Endothelial cell of umbilical vein (primary cell): ENCODE measurements at regions of chr16 and their contacts with region 1.

Region 1: DNA sequence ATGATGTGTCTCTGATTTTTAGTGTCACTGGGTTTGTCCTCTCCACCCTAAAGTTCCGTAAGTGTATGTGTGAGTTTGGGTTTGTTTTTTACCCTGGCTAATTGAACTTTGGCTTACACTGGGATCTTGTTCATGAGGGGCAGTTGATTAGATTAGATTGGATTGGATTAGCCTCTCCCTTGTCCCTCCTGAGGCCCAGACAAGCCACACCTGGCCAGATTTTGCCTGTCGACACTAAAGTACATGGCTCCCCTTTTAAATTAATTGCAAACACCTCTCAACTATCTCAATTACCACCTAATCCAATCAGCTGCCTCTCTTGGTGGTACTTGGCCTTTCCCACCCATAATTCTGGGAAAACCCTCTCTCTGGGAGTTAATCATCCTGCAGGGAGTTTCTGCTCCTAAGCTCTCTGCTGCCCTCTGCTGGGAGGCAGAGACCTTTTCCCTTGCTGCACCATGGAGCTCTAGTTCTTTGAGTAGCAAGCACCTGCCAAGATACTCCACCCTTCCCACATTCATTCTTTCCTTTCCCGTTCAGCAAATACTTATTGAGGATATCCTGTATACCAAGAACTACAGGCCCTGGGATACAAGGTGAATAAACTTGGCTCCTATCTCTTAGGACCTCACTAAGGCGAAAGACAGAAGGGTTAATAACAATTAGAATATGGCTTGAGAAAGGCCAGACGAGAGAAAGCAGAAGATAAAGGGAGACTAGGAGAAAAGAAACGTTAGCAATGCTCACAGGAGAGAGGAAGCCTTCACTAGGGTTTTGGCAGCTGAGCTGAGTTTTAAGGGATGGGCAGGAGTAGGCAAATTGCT is 60.0 kb upstream of the MPHOSPH6 start:
- DNase-seq: peak; percentile 76
- H3K4me3 ChIP-seq: no peak overlapping the region
- H3K27ac ChIP-seq: no peak overlapping the region
- H3K4me1 ChIP-seq: no peaks in the 10 kb centered on the region
- H3K27me3 ChIP-seq: peaks cover 9 to 18% of the 10 kb centered on the region in 2 experiments
- CTCF ChIP-seq: peak; percentile 88 to 92
- POLR2A ChIP-seq: no peak

Region 2: GRCh38 chr16:81885976-81886586 is 343.9 kb before region 1 on chr16:
- CTCF ChIA-PET with region 1: interaction called, 59 read pairs
- POLR2A ChIA-PET with region 1: no interaction called
- dilution Hi-C with region 1: no loop called
- intact Hi-C with region 1: loop called (anchors 1 kb)
- DNase-seq: peak; percentile 40
- H3K4me3 ChIP-seq: no peak overlapping the region
- H3K27ac ChIP-seq: no peak overlapping the region
- H3K4me1 ChIP-seq: no peaks in the 10 kb centered on the region
- H3K27me3 ChIP-seq: no peaks in the 10 kb centered on the region
- CTCF ChIP-seq: peak; percentile 73 to 78
- POLR2A ChIP-seq: no peak

Region 3: DNA sequence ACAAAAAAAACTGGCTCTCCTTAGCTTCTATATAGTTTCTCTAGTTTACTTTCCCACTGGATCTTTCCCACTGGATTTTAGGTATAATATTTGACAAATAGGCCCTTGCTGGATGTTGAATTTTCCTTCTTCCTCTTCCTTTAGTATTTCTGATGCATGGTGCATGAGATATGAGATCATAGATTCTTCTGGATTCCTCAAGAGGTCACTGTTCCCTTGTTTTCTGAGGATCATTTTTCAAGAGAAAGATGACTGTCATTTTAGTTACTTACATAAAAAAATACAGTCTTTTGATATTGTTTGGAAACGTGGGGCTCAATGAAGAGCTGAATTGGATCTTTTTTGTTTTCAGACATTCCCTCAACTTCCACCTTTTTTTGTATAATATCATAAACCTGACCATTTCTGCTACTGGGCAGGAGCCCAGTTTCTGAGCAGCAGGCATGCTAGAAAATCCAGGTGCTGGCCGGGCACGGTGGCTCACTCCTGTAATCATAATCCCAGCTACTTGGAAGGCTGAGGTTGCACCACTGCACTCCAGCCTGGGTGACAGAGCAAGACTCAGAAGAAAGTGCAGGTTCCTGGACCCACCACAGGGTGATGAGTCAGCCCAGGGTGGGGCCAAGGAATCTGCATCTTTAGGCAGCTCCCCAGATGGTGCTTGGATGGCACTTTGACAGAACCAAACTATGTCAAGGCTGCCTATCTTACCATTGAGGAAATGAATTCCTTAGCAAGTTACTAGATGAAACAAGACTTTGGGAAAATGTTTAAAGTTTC is 289.0 kb before region 1 on chr16:
- CTCF ChIA-PET with region 1: interaction called, 171 read pairs
- POLR2A ChIA-PET with region 1: no interaction called
- dilution Hi-C with region 1: no loop called
- intact Hi-C with region 1: loop called (anchors 1 kb)
- DNase-seq: peak; percentile 70
- H3K4me3 ChIP-seq: no peak overlapping the region
- H3K27ac ChIP-seq: no peak overlapping the region
- H3K4me1 ChIP-seq: no peaks in the 10 kb centered on the region
- H3K27me3 ChIP-seq: no peaks in the 10 kb centered on the region
- CTCF ChIP-seq: peak; percentile 37 to 47
- POLR2A ChIP-seq: no peak

Region 4: DNA sequence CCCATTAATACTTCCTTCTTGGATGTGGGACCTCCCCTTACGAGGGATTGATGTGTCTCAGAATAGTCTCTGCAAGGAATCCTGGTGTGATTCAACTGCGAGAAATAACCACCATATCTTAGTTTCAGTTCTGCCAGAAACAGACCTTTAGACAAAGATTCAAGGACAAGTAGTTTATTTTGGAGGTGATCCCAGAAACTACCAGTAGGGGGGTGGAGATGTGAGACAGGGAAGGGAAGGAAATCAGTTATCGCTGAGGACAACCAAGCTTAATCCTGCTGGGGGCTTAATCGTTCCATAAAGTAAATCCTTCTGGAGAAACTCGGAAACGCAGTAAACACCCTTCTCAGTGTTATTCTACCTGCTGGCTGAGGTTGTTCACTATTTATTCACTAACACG is 213.7 kb before region 1 on chr16:
- CTCF ChIA-PET with region 1: interaction called, 11 read pairs
- POLR2A ChIA-PET with region 1: no interaction called
- dilution Hi-C with region 1: no loop called
- intact Hi-C with region 1: no loop called
- DNase-seq: peak; percentile 90
- H3K4me3 ChIP-seq: peak overlapping the region in 1 of 3 experiments; percentile 45
- H3K27ac ChIP-seq: no peak overlapping the region
- H3K4me1 ChIP-seq: peaks cover 9% of the 10 kb centered on the region
- H3K27me3 ChIP-seq: peaks cover 4 to 15% of the 10 kb centered on the region in 2 experiments
- CTCF ChIP-seq: peak; percentile 52 to 58
- POLR2A ChIP-seq: no peak

Region 5: DNA sequence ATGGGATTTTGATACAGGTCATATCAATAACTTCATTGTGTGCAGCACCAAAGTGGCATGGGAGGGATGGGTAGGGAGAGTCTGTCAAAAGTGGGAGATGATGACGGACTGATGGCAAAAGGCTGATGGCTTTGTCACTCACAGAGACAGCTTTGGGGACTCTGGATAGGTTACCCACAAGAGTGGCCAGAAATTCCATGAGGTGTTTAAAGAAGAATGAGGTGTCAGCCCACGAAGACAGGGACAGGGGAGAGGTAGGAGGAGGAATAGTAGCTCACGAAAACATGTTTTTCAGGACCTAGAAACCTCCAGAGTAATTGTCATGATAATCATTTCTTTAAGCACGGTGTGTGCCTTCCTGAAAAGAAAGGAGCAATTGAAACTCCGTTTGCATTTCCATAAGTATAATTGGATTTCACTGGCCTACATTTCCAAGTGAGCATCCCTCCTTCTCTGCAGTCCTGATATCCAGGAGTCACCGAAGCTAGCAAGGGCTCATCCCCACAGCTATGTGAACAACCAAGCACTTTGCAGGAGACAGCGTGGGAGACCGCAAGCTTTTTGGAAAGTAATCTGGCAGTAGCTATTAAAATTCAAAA is 135.0 kb before region 1 on chr16:
- CTCF ChIA-PET with region 1: interaction called, 10 read pairs
- POLR2A ChIA-PET with region 1: no interaction called
- dilution Hi-C with region 1: no loop called
- intact Hi-C with region 1: no loop called
- DNase-seq: no peak
- H3K4me3 ChIP-seq: no peak overlapping the region
- H3K27ac ChIP-seq: no peak overlapping the region
- H3K4me1 ChIP-seq: no peaks in the 10 kb centered on the region
- H3K27me3 ChIP-seq: peaks cover 0 to 8% of the 10 kb centered on the region in 2 experiments
- CTCF ChIP-seq: no peak
- POLR2A ChIP-seq: no peak

Region 6: GRCh38 chr16:82178352-82178751 is 51.7 kb before region 1 on chr16:
- CTCF ChIA-PET with region 1: interaction called, 16 read pairs
- POLR2A ChIA-PET with region 1: no interaction called
- dilution Hi-C with region 1: no loop called
- intact Hi-C with region 1: no loop called
- DNase-seq: peak; percentile 20
- H3K4me3 ChIP-seq: no peak overlapping the region
- H3K27ac ChIP-seq: no peak overlapping the region
- H3K4me1 ChIP-seq: no peaks in the 10 kb centered on the region
- H3K27me3 ChIP-seq: peaks cover 6 to 17% of the 10 kb centered on the region in 2 experiments
- CTCF ChIP-seq: no peak
- POLR2A ChIP-seq: no peak